ENCODE measurements at regions of chr2 and their contacts with region 1.

Region 1: DNA sequence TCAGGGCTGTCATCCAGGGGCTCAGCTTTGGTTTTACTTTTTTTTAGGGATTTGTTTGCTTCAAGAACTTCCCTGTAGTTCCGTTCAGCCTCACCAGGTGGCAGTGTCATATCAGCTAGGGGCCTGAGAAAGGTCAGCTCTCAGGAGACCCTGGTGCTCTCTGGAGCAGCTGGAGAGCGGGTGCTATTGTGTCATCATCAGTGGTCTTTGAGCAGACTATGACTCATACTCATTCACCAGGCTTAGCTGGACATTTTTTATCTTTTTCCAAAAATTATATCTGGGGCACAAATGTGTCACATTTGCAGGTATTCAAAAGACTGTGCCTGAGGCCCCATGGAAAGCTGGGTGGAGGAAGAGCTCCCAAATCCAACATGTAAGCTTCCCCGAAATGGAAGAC is 24.4 kb downstream of the ZNF892 start:
- H3K4me3 ChIP-seq: no peak overlapping the region
- H3K27ac ChIP-seq: no peak overlapping the region
- H3K4me1 ChIP-seq: no peaks in the 10 kb centered on the region
- CTCF ChIP-seq: no peak

Region 2: GRCh38 chr2:95215018-95215612 is 16.6 kb before region 1 on chr2:
- CTCF ChIA-PET with region 1: interaction called, 10 read pairs
- POLR2A ChIA-PET with region 1: no interaction called
- H3K4me3 ChIP-seq: no peak overlapping the region
- H3K27ac ChIP-seq: no peak overlapping the region
- H3K4me1 ChIP-seq: no peaks in the 10 kb centered on the region
- CTCF ChIP-seq: no peak

Region 3: DNA sequence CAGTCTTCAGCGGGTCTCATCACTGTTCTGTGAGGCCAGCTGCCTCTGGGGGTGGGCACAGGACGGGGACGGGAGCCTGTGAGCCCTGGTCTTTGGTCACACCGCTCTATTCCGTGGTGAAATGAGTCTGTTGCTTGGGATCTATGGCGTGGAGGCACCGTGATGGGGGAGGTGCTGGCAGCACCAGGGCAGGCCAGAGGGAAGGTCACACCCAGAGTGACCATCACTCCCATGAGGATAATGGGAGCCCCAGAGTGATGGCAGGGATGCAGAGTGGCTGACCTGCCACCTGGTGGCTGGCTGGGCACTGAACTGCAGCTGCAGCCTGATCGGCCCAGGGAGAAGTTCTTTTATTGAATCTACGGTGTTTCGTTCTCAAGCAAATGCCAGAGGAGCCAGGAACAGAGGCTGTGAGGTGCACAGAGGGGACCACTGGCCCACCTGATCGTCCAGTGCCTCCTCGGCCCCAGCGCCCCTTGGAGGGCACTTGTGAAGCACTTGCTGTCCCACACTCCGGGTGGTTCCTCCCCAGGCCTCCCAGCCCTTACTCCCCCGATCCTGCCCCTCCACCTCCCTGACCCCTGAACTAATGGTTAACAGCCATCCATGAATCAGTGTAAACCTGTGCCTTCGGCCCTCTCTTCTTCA is 83.4 kb after region 1 on chr2:
- CTCF ChIA-PET with region 1: interaction called, 27 read pairs
- POLR2A ChIA-PET with region 1: no interaction called
- H3K4me3 ChIP-seq: no peak overlapping the region
- H3K27ac ChIP-seq: no peak overlapping the region
- H3K4me1 ChIP-seq: no peaks in the 10 kb centered on the region
- CTCF ChIP-seq: peak; percentile 68

Region 4: DNA sequence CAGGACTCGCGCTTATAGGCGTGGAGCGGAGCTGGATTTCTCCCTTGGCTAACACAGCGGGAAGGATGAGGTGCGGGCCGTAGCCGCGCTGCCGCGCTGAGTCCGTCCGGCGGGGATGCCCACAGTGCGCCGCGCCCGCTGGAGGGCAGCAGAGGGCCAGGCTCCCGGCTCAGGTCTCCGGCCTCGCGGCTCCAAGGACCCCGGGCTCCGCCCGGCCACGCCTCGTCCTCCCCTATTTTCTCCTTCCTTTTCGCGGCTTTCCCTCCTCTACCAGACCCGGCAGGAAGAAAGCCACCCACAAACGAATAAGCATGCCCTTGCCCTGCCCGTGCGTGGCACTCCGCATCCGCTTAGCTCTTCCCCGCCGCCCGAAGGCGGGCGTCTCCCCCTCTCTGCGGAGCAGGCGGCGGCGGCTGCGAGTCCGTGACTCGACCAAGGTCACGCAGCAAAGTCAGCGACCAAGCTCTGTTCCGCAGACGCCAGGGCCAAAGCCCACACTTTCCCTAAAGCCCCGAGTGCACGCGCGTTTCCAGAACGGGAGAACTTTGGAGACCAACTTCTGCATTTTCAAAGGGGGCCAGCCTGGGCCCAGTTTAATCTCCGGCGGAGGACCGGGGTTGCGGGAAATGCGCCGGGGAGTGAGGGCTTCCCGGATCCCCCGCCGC is 114.0 kb after region 1 on chr2:
- CTCF ChIA-PET with region 1: interaction called, 16 read pairs
- POLR2A ChIA-PET with region 1: no interaction called
- H3K4me3 ChIP-seq: peak overlapping the region; percentile 46
- H3K27ac ChIP-seq: peak overlapping the region; percentile 67; the same call in 1 of the 2 replicates
- H3K4me1 ChIP-seq: no peaks in the 10 kb centered on the region; the same call in 1 of the 2 replicates
- CTCF ChIP-seq: peak; percentile 93

Region 5: GRCh38 chr2:95389245-95390119 is 157.8 kb after region 1 on chr2:
- CTCF ChIA-PET with region 1: interaction called, 13 read pairs
- POLR2A ChIA-PET with region 1: no interaction called
- H3K4me3 ChIP-seq: no peak overlapping the region
- H3K27ac ChIP-seq: no peak overlapping the region
- H3K4me1 ChIP-seq: no peaks in the 10 kb centered on the region
- CTCF ChIP-seq: peak; percentile 84

Measured in HEK293 (cell line).